PC-3 (cell line): ENCODE measurements at regions of chr6 and their contacts with region 1.

Region 1: GRCh38 chr6:66199171-66199570 is 492.1 kb upstream of the EYS start:
- DNase-seq: peak; percentile 24
- ATAC-seq: no peak
- H3K4me3 ChIP-seq: no peak overlapping the region
- H3K27ac ChIP-seq: no peak overlapping the region
- H3K4me1 ChIP-seq: no peaks in the 10 kb centered on the region
- H3K27me3 ChIP-seq: no peaks in the 10 kb centered on the region
- CTCF ChIP-seq: no peak

Region 2: GRCh38 chr6:65448866-65449265 is 750.3 kb before region 1 on chr6:
- CTCF ChIA-PET with region 1: interaction called, 17 read pairs
- POLR2A ChIA-PET with region 1: no interaction called
- intact Hi-C with region 1: no loop called
- DNase-seq: no peak
- ATAC-seq: no peak
- H3K4me3 ChIP-seq: no peak overlapping the region
- H3K27ac ChIP-seq: no peak overlapping the region
- H3K4me1 ChIP-seq: no peaks in the 10 kb centered on the region
- H3K27me3 ChIP-seq: no peaks in the 10 kb centered on the region
- CTCF ChIP-seq: no peak